Activated T-helper 2 cell treated with anti-CD3 and anti-CD28 coated beads, Interferon-gamma antibody, Interleukin-2, Interleukin-4, amounts not matched to agents 10 μg/mL and 5 μg/mL and 100 μg/mL, durations not matched to agents 14 hours and 24 hours and 36 hours (primary cell): ENCODE measurements at regions of chr17 and their contacts with region 1.

Region 1: GRCh38 chr17:80544655-80545498 is at the start of gene RPTOR:
- DNase-seq: peak; percentile 86
- H3K4me3 Mint-ChIP-seq: peak within 1 kb of the TSS; percentile 93
- H3K27ac Mint-ChIP-seq: peak within 1 kb of the TSS; percentile 94
- H3K4me1 Mint-ChIP-seq: peaks cover 25% of the 10 kb centered on the region
- H3K27me3 Mint-ChIP-seq: no peaks in the 10 kb centered on the region
- total RNA-seq, gene RPTOR: 59.9 and 62.4 TPM in 2 replicates

Region 2: GRCh38 chr17:80284631-80285030 is 260.2 kb before region 1 on chr17:
- intact Hi-C with region 1: no loop called
- DNase-seq: no peak
- H3K4me3 Mint-ChIP-seq: no peak overlapping the region
- H3K27ac Mint-ChIP-seq: peak overlapping the region; percentile 30
- H3K4me1 Mint-ChIP-seq: peaks cover 4% of the 10 kb centered on the region
- H3K27me3 Mint-ChIP-seq: no peaks in the 10 kb centered on the region

Region 3: GRCh38 chr17:80374732-80375585 is 169.9 kb before region 1 on chr17:
- intact Hi-C with region 1: no loop called
- DNase-seq: no peak
- H3K4me3 Mint-ChIP-seq: no peak overlapping the region
- H3K27ac Mint-ChIP-seq: no peak overlapping the region
- H3K4me1 Mint-ChIP-seq: no peaks in the 10 kb centered on the region
- H3K27me3 Mint-ChIP-seq: no peaks in the 10 kb centered on the region

Region 4: DNA sequence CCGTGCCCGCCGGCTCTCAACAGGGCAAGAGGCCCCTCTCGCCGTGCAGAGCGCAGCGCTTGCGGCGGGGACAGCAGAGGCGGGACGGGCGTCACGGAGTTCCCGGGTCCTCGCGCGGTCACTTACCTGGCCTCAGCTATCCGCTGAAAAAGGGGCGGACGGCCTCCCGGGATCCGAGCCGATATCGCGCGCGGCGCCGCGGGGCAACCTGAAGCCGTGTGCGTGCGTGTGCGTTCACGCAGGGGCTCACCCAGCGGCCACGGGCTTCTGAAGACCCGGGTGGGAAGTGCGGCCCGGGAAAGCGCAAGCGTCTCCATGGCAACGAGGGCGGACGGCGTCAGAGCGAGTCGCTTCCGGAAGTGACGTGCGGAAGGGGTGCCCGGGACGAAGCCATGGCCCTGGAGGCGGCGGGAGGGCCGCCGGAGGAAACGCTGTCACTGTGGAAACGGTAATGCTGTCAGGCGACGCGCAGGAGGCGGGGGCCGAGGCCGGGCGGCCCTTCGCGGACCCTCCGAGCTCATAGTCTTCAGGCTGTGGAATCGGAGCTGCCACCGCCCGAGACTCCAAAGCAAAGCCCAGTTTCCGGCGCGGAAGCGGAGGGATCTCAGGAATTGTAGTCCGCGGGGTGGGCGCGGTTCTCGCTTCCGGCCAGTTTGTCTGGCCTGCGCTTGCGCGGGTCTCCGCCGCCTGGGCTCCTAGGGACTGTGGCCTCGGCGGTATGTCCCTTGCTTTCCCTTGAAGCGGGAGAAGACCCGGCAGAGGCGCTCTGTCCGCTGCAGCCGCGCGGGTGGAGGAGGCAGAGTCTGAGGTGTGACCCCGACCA is 129.9 kb before region 1 on chr17 and contains the start of gene ENDOV:
- intact Hi-C with region 1: loop called (anchors 10 kb)
- DNase-seq: peak; percentile 89
- H3K4me3 Mint-ChIP-seq: peak within 1 kb of the TSS; percentile 86
- H3K27ac Mint-ChIP-seq: no peak within 1 kb of the TSS
- H3K4me1 Mint-ChIP-seq: peaks cover 9% of the 10 kb centered on the region
- H3K27me3 Mint-ChIP-seq: peaks cover 27% of the 10 kb centered on the region
- total RNA-seq, gene ENDOV: 16.1 and 16.8 TPM in 2 replicates